GM13977 (cell line): ENCODE measurements at regions of chr11 and their contacts with region 1.

Region 1: DNA sequence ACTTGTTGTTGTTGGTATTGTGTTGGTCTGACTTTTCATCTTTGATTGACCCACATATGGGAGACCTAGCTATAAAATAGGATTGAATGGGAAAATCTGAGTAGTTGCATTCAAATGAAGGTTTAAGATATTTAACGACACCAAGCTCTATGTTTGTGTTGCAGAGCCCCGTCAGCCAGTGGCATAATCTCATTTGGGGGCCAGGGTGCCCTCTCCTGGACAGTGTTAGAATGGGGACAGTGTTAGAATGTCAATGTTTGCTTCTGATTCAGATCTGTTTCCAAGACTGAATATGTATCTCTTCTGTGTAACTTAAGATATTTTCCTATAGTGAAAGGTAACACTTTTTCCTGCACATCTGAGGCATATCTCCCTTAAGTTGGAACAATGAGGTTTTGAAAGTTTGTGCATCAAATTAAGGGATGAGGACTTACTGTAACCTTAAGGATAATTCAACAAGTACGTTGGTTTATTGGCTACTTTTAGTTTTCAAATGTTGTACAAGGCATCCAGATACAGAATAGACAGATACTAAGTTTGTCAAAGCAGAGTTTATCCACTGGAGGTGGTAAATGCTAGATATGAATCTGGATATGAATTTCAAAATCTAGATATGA is 5.3 kb upstream of the OR52M1 start:
- DNase-seq: peak; percentile 48
- CTCF ChIP-seq: peak; percentile 82

Region 2: DNA sequence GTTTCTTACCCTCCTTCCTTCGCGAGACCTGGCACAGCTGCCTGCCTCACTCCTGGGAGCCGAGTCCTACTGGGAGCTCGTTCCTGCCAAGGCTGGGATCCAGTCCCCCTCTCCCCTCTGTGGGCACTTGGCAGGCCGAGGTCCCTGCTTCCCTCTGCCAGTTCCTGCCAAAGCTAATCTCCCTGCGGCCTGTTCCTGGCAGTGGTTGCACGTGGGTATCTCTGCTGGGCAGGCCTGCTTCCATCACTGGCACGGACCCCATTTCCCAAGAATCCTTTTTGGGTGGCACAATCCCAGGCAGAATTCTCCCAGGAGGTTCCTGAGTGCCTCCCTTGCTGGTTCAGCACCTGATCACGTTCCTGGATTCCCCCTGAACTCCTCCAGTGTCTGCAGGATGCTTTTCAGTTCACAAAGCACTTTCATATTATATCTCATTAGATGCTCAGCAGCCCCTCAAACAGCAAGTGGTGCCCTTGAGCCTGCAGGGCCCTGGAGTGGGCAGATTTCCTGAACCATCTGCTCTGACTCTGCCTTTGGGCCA is 348.6 kb before region 1 on chr11:
- in situ Hi-C with region 1: loop called (anchors 5 kb)
- DNase-seq: no peak
- CTCF ChIP-seq: no peak

Region 3: DNA sequence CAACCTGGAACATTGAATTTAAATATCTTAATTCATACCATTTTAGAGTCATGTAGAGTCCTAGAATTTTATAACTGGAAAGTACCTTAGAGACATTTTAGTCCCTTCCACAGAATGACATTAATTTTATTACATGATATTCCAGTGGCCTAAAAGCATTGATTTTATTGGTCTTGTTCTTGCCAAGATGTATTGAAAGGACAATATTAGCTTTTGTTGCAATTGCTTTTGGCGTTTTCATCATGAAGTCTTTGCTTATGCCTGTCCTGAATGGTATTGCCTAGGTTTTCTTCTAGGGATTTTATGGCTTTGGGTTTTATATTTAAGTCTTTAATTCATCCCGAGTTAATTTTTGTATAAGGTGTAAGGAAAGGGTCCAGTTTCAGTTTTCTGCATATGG is 201.0 kb after region 1 on chr11:
- in situ Hi-C with region 1: no loop called
- DNase-seq: no peak
- CTCF ChIP-seq: no peak